ENCODE measurements at regions of chr20 and their contacts with region 1.

Region 1: GRCh38 chr20:52291109-52291508 is 99.5 kb upstream of the ZFP64 start:
- DNase-seq: no peak
- H3K4me3 ChIP-seq: no peak overlapping the region
- H3K27ac ChIP-seq: no peak overlapping the region
- H3K4me1 ChIP-seq: no peaks in the 10 kb centered on the region
- H3K27me3 ChIP-seq: no peaks in the 10 kb centered on the region
- CTCF ChIP-seq: no peak

Region 2: GRCh38 chr20:52083627-52084232 is 207.4 kb before region 1 on chr20:
- intact Hi-C with region 1: no loop called
- DNase-seq: peak; percentile 57
- H3K4me3 ChIP-seq: no peak overlapping the region
- H3K27ac ChIP-seq: no peak overlapping the region
- H3K4me1 ChIP-seq: no peaks in the 10 kb centered on the region
- H3K27me3 ChIP-seq: no peaks in the 10 kb centered on the region
- CTCF ChIP-seq: peak; percentile 37

Region 3: DNA sequence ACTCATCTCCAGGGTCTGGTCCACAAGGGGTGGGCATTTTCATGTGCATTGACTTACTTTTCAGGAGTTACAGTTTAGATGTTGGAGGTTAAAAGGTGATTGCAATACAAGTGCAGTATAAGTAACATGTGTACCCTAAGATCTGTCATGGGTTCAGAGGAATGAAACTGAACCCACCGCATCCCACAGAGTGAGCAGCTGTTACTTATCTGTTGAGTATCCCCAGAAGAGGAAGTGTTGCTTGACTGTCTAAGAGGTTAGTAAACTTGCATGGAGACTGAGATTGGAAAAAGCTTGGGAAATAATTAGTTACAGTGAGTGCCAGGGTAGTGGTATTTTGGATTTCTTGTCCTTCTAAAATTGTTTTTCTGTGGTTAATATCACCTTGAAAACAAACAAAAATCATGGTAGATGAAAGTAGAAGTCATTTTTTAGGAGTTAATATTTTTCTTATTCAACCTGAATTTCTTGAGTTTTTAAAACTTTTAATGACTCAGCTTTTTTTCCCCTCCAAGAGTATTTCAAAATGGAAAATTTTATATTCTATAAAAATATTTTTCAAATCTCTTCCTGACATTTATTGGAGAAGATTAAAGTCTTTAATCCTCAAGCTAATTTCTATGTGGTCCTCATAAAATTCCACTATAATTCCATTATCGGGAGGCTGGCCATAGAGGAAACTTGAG is 996.4 kb after region 1 on chr20:
- intact Hi-C with region 1: loop called (anchors 10 kb)
- DNase-seq: no peak
- H3K4me3 ChIP-seq: no peak overlapping the region
- H3K27ac ChIP-seq: no peak overlapping the region
- H3K4me1 ChIP-seq: no peaks in the 10 kb centered on the region
- H3K27me3 ChIP-seq: no peaks in the 10 kb centered on the region
- CTCF ChIP-seq: no peak

Measured in colonic mucosa (tissue), 4 donors.